MCF 10A (cell line): ENCODE measurements at regions of chr15 and their contacts with region 1.

Region 1: GRCh38 chr15:45732662-45733061 is 97.8 kb downstream of the SQOR start:
- DNase-seq: peak; percentile 29
- H3K4me3 Mint-ChIP-seq: no peak overlapping the region
- H3K27ac Mint-ChIP-seq: no peak overlapping the region
- H3K4me1 Mint-ChIP-seq: peaks cover 15% of the 10 kb centered on the region
- H3K27me3 Mint-ChIP-seq: no peaks in the 10 kb centered on the region
- CTCF ChIP-seq: no peak

Region 2: DNA sequence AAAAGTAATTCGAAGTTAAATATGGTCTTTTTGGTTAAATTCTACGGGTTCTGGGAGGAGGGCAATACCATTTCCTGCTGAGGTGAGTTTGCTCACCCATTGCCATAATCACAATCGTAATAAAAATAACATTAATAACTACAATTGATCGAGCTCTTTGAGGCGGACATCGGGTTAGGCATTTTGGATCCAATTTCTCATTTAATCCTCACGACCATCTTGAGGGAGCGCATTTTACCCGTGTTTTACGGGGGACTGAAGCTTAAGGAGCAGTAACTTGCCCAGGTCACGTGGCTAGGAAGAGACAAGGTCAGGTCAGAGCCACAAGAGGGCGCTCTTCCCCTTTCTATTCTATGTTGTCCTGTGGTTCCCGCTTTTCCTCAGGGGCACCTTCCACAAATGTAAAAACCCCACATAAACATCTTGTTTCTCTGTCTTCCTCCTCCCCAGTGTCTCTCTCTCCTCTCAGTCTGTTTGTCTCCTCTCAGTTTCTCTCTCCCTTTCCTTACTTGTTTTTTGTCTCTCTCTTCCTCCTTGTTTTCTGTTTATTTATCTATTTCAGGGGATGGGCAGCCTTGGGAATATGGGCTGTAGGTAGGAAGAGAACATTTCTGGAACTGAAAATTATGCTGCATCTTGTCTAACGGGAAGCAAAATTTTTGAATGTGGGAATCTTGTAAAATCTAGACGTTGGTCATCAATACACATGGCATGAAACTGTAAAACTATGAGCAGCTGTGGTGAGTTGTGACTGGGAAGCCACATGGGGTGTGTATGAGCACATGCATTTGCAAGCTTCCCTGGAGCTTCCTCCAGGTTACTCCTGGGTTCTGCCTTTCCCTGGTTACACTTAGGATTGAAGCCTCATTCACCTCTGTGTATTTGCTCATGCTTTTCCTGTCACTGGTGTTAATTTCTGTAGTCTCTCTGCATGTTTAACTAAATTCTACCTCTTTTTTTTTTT is 26.9 kb before region 1 on chr15:
- CTCF ChIA-PET with region 1: interaction called, 13 read pairs
- POLR2A ChIA-PET with region 1: no interaction called
- intact Hi-C with region 1: no loop called
- DNase-seq: peak; percentile 86
- H3K4me3 Mint-ChIP-seq: peak overlapping the region; percentile 87
- H3K27ac Mint-ChIP-seq: peak overlapping the region; percentile 79
- H3K4me1 Mint-ChIP-seq: peaks cover 22% of the 10 kb centered on the region
- H3K27me3 Mint-ChIP-seq: no peaks in the 10 kb centered on the region
- CTCF ChIP-seq: peak; percentile 79